ENCODE measurements at regions of chr15 and their contacts with region 1.

Region 1: DNA sequence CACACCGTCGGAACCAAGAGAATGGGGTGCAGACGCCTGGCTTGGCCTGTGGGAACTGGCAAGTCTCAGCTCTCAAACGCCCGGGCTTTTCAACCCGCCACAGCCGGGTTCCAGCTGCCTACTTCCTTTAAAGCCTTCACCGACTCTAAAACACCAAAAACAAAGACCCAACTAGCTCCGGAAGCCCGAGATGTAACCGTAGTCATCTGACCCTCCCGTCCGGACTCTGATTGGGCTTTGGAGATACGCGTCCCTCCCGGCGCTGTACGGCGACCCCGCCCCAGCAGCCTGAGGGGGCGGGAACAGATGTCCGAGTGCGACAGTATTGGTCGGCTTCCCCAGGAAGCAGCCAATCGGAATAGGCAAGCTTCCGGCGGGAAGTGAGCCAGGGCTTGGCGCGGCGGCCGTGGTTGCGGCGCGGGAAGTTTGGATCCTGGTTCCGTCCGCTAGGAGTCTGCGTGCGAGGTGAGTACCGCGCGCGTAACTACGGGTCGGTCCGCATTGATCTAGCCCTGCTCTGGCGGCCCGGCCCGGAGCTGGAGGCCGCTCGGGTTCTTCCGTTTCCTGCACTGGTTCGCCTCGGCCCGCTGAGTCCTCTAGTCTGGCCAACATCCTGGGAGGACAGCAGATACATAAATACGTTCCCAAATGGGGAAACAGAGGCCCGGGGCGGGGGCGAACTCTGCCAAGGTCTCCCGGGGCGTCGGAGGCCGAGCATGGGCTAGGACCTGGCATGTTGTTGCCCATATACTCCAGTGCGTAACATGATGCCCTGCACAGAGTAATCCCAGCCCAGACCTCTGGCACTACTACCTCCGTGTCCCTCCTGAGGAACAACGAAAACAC is at the start of gene BLM:
- DNase-seq: peak; percentile 88 to 99 (median 93)
- ATAC-seq: peak; percentile 99
- H3K4me3 ChIP-seq: peak within 1 kb of the TSS; percentile 78
- H3K4me3 Mint-ChIP-seq: peak within 1 kb of the TSS; percentile 99
- H3K27ac ChIP-seq: peak within 1 kb of the TSS; percentile 82 to 92
- H3K27ac Mint-ChIP-seq: peak within 1 kb of the TSS; percentile 96
- H3K4me1 ChIP-seq: peaks cover 13% of the 10 kb centered on the region
- H3K4me1 Mint-ChIP-seq: peaks cover 29% of the 10 kb centered on the region
- H3K27me3 ChIP-seq: no peaks in the 10 kb centered on the region
- H3K27me3 Mint-ChIP-seq: no peaks in the 10 kb centered on the region
- CTCF ChIP-seq: peak; percentile 27
- total RNA-seq, gene BLM: 1.6 to 1.8 TPM

Region 2: DNA sequence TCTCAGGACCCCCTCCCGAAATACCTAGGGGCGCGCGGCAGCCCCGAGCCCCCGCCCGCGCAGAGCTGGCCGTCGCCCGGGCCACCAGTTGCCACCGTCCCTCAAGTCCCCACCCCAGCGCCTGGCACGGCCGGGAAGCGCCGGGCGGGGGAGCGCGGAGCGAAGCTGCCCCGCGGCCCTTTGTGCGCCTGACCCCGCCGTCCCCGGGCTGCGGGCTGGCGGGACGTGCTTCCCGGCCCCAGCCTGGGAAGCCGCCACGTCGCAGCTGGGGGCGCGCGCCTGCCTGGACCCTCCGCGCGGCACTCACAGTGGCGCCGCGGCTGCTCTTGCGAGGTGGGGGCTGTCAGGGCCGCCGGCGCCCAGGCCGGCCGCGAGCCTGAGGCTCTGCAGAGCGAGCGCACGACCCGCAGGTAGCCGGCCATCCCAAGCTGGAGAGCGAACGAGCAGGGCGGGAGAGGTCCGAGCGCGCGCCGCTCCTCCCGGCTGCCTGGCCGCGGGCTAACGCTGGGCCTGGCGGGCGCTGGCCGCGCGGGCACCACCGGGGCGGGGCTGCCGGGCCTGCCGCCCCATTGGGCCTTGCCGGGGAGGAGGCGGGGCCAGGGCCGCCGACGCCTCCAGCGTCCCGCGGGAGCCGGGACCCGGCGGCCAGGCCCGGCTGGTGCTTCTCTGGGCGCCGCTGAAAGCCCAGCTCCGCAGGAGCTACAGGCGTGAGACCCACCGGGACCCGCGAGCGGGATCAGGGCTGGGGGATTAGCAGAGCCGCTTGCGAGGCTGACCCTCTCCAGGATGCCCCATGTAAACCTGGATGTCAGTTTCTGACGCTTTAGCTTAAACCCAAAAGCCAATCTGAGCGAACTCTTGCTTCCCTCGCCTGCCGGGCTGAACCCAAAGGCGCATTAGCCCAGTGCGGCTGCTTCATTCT is 615.0 kb before region 1 on chr15 and contains the start of gene IDH2:
- CTCF ChIA-PET with region 1: no interaction called
- POLR2A ChIA-PET with region 1: no interaction called
- intact Hi-C with region 1: loop called in 1 of 2 experiments (anchors 10 kb)
- DNase-seq: peak; percentile 37 to 89 (median 63)
- ATAC-seq: peak; percentile 68
- H3K4me3 ChIP-seq: peak within 1 kb of the TSS; percentile 75
- H3K4me3 Mint-ChIP-seq: peak within 1 kb of the TSS; percentile 90
- H3K27ac ChIP-seq: peak within 1 kb of the TSS; percentile 84 to 86
- H3K27ac Mint-ChIP-seq: peak within 1 kb of the TSS; percentile 88
- H3K4me1 ChIP-seq: peaks cover 48% of the 10 kb centered on the region
- H3K4me1 Mint-ChIP-seq: peaks cover 58% of the 10 kb centered on the region
- H3K27me3 ChIP-seq: no peaks in the 10 kb centered on the region
- H3K27me3 Mint-ChIP-seq: no peaks in the 10 kb centered on the region
- CTCF ChIP-seq: no peak
- total RNA-seq, gene IDH2: 38.0 to 38.2 TPM

Region 3: GRCh38 chr15:90660195-90660998 is 56.8 kb before region 1 on chr15:
- CTCF ChIA-PET with region 1: interaction called, 3 read pairs
- POLR2A ChIA-PET with region 1: interaction called, 6 read pairs
- intact Hi-C with region 1: loop called in 1 of 2 experiments (anchors 10 kb)
- DNase-seq: peak; percentile 22 to 84 (median 60)
- ATAC-seq: peak; percentile 77
- H3K4me3 ChIP-seq: peak overlapping the region; percentile 20
- H3K4me3 Mint-ChIP-seq: peak overlapping the region; percentile 74
- H3K27ac ChIP-seq: no peak overlapping the region
- H3K27ac Mint-ChIP-seq: peak overlapping the region; percentile 46
- H3K4me1 ChIP-seq: peaks cover 74% of the 10 kb centered on the region
- H3K4me1 Mint-ChIP-seq: peaks cover 83% of the 10 kb centered on the region
- H3K27me3 ChIP-seq: peaks cover 8 to 30% of the 10 kb centered on the region in 2 experiments
- H3K27me3 Mint-ChIP-seq: peaks cover 27% of the 10 kb centered on the region
- CTCF ChIP-seq: no peak

Region 4: DNA sequence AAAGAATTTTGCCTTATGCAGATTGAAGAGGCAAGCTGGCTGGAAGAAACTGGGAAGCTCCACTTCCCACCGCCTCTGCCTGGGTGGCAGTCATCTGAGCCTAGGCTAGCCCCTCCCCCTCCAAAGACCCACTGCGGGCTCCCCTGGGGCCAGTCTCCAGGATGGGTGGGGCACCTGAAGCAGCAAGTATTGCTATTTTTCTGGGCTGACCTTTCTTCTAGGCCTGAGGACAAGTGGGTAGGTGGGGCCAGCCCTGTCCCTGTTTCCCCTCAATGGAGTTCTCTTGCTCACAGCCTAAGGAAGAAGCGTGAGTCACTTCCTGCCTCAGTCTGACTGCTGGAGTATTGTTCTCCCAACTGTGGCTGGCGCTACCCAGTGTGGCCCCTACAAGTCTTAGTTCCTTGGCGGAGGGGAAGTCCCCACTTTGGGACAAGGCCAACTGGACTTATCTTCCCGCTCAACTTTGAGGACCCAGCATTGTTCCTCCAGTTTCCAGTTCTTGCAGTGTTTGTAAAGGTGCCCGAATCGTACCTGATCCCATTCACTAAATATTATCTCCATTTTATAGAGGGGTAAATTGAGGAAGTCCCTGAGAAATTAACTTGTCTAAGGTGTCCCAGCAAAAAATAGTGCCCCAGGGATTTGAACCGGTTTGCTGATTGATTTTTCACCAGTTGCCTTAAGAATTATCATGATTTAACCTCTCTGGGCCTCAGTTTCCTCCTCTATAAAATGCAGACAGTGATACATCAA is 152.6 kb after region 1 on chr15:
- CTCF ChIA-PET with region 1: interaction called, 3 read pairs
- POLR2A ChIA-PET with region 1: interaction called, 16 read pairs
- intact Hi-C with region 1: loop called (anchors 2 to 10 kb)
- DNase-seq: peak in 6 of 14 experiments; percentile 17 to 74 (median 52)
- ATAC-seq: peak; percentile 32
- H3K4me3 ChIP-seq: no peak overlapping the region
- H3K4me3 Mint-ChIP-seq: peak overlapping the region; percentile 98
- H3K27ac ChIP-seq: peak overlapping the region in 1 of 2 donors; percentile 25
- H3K27ac Mint-ChIP-seq: peak overlapping the region; percentile 89
- H3K4me1 ChIP-seq: peaks cover 46% of the 10 kb centered on the region
- H3K4me1 Mint-ChIP-seq: peaks cover 41% of the 10 kb centered on the region
- H3K27me3 ChIP-seq: no peaks in the 10 kb centered on the region
- H3K27me3 Mint-ChIP-seq: no peaks in the 10 kb centered on the region
- CTCF ChIP-seq: no peak

Region 5: GRCh38 chr15:90902040-90902839 is 185.0 kb after region 1 on chr15:
- CTCF ChIA-PET with region 1: no interaction called
- POLR2A ChIA-PET with region 1: interaction called, 16 read pairs
- intact Hi-C with region 1: no loop called
- DNase-seq: peak; percentile 52 to 88 (median 62)
- ATAC-seq: peak; percentile 67
- H3K4me3 ChIP-seq: peak overlapping the region; percentile 69
- H3K4me3 Mint-ChIP-seq: peak overlapping the region; percentile 87
- H3K27ac ChIP-seq: peak overlapping the region; percentile 15 to 65
- H3K27ac Mint-ChIP-seq: peak overlapping the region; percentile 76
- H3K4me1 ChIP-seq: peaks cover 19% of the 10 kb centered on the region
- H3K4me1 Mint-ChIP-seq: peaks cover 34% of the 10 kb centered on the region
- H3K27me3 ChIP-seq: no peaks in the 10 kb centered on the region
- H3K27me3 Mint-ChIP-seq: no peaks in the 10 kb centered on the region
- CTCF ChIP-seq: peak; percentile 91

Measured in CD4-positive, alpha-beta T cell (primary cell).